Activated CD8-positive, alpha-beta T cell treated with anti-CD3 and anti-CD28 coated beads, Interleukin-2, amount 10 ng/mL, durations not matched to agents 7 days and 5 days (primary cell): ENCODE measurements at regions of chr1 and their contacts with region 1.

Region 1: GRCh38 chr1:94039514-94039870 is 81.5 kb downstream of the ABCA4 start:
- DNase-seq: peak; percentile 66
- ATAC-seq: no peak
- H3K4me3 Mint-ChIP-seq: no peak overlapping the region
- H3K27ac Mint-ChIP-seq: no peak overlapping the region
- H3K4me1 Mint-ChIP-seq: no peaks in the 10 kb centered on the region
- H3K27me3 Mint-ChIP-seq: peaks cover 22% of the 10 kb centered on the region

Region 2: DNA sequence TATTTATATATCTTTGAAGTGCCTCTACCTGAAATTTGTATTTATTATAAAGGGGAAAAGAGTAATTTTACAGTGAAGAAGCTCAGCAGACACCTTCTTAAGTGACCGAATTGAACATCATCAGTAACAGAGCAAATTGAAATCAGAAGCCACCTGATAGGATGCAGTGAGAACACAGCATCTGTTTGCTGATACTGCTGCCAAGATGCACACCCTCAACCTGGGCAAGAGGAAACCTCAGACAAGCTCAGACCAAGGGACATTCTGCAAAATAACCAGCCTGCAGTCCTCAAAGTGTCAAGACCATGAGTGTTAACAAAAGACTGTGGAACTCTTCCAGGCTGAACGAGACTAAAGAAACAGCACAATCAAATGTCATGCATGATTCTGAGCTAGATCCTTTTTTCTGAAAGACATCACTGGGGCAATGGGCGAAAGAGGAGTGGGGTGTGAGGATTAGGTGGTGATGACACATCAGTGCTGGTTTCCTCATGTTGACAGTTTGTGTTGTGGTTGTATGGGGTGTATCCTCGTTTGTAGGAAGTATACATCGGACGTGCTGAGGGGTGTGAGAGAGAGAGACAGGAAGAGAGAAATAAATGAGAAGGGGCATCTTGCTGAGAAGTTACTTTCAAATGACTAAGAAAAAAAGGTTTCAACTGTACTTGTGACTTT is 22.2 kb before region 1 on chr1:
- CTCF ChIA-PET with region 1: interaction called, 19 read pairs
- POLR2A ChIA-PET with region 1: no interaction called
- DNase-seq: peak; percentile 66
- ATAC-seq: peak; percentile 90
- H3K4me3 Mint-ChIP-seq: no peak overlapping the region
- H3K27ac Mint-ChIP-seq: peak overlapping the region; percentile 80
- H3K4me1 Mint-ChIP-seq: peaks cover 21% of the 10 kb centered on the region
- H3K27me3 Mint-ChIP-seq: peaks cover 9% of the 10 kb centered on the region

Region 3: DNA sequence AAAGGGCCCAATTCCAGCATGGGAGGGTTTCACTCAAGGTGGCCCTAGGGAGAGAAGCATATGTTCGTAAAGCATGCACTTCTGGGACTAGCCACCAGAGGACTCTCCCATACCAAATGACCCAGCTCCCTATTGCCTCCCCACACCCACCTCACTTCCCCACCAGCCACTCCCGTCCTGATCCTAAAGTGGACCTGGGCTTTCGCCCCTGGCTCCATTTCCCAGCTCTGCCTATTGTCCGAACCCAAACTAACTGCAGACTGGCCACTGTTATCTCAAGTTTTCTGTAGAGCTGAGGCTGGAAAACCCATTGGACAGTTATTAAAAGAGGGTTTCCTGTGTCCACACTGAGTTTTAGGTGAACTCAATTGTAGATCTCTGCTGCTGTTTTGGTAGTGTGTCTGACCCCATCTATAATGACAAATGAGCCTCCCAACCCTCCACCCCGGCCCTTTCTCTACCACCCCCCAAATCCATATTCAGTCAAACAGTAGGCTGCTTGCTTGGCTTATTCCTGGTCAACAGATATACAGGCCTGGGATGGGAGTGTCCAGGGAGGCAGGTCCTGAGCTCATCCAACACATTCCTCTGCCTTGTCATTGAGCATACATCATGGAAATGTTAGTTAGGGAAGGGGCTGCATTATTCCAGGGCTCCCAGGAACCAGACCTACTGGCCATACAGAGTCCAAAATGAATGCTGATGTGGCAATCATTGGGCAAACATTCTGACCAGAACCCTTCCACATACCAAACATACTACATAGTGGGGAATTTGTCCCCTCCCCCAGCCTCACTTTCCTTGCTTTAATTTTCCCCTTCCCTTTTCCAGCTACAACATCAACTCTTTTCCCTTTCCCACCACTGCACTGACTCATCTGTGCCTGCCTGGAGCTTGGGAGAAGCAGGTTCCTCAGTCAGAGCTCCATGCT is 22.3 kb after region 1 on chr1:
- CTCF ChIA-PET with region 1: interaction called, 10 read pairs
- POLR2A ChIA-PET with region 1: no interaction called
- DNase-seq: peak; percentile 54
- ATAC-seq: peak; percentile 80
- H3K4me3 Mint-ChIP-seq: no peak overlapping the region
- H3K27ac Mint-ChIP-seq: no peak overlapping the region
- H3K4me1 Mint-ChIP-seq: no peaks in the 10 kb centered on the region
- H3K27me3 Mint-ChIP-seq: peaks cover 23% of the 10 kb centered on the region

Region 4: GRCh38 chr1:94329986-94330385 is 290.5 kb after region 1 on chr1:
- CTCF ChIA-PET with region 1: interaction called, 41 read pairs
- POLR2A ChIA-PET with region 1: no interaction called
- DNase-seq: no peak
- ATAC-seq: no peak
- H3K4me3 Mint-ChIP-seq: no peak overlapping the region
- H3K27ac Mint-ChIP-seq: no peak overlapping the region
- H3K4me1 Mint-ChIP-seq: peaks cover 7% of the 10 kb centered on the region
- H3K27me3 Mint-ChIP-seq: peaks cover 25% of the 10 kb centered on the region

Region 5: GRCh38 chr1:94463765-94464330 is 424.4 kb after region 1 on chr1:
- CTCF ChIA-PET with region 1: interaction called, 23 read pairs
- POLR2A ChIA-PET with region 1: no interaction called
- DNase-seq: peak; percentile 25
- ATAC-seq: peak; percentile 44
- H3K4me3 Mint-ChIP-seq: no peak overlapping the region
- H3K27ac Mint-ChIP-seq: no peak overlapping the region
- H3K4me1 Mint-ChIP-seq: no peaks in the 10 kb centered on the region
- H3K27me3 Mint-ChIP-seq: no peaks in the 10 kb centered on the region